Posterior vena cava (tissue), 2 donors: ENCODE measurements at regions of chr4 and their contacts with region 1.

Region 1: DNA sequence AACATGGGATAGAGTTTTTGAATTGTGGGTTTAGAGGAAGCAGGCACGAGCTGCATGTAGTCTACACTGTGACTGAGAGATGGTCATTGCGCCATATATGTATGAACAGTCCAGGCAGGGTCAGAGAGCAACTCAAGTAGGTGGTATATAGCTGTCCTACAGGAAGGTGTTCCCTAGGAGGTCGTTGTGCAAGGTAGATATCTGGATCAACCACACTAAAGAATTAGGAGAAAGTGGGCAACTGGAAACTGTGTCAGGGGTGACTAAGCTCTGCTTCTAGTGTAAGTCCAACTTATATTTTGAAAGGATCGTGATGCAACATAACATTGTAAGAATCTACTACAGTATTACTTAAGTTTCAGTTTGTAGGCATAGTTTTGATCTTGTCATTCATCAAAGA is 94.6 kb downstream of the HPGD start:
- DNase-seq: no peak

Region 2: GRCh38 chr4:174398728-174399127 is 28.9 kb before region 1 on chr4:
- intact Hi-C with region 1: loop called in 1 of 2 experiments (anchors 1 kb)
- DNase-seq: no peak